ENCODE measurements at regions of chrX and their contacts with region 1.

Region 1: DNA sequence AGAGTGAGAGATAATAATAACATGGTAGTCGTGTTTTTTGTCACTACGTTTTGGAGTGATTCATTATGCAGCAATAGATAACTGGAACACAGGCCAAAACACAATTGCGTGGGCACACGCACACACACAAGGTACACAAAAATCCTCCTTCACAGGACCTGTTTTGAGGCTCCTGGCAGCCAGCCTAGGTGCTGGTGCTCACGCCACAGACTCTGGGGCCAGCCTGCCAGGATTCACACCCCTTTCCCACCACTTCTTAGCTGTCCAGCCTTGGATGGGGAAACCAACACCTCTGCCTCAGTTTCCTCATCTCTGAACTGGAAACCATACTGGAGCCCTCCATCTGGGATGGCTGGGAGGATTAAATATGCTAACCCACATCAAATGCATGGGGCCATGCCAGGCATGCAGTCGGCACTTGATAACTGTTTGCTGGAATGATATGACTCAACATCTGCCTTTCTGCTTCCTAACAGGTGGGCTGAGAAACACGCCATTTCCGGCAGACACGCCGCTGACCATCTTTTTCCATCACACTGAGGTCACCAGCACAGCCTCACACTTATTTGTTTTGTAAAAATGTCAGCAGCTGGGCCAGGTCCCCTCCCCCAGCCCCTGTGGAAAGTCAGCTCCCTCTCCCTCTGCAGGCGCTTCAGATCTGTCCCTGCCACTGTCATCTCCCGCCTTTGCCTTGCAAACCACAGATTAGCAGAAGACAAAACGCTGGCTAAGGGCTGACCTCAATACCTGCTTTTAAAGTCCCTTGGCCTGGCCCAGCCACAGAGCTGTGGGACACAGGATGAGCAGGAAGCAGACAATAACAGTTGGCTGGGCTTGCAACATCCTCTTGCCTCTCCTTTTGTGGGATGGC is 237.5 kb downstream of the BCOR start:
- DNase-seq: peak; percentile 86
- ATAC-seq: peak; percentile 74
- H3K4me3 Mint-ChIP-seq: peak overlapping the region; percentile 3
- H3K27ac Mint-ChIP-seq: peak overlapping the region; percentile 88
- H3K4me1 Mint-ChIP-seq: peaks cover 64% of the 10 kb centered on the region
- H3K27me3 Mint-ChIP-seq: no peaks in the 10 kb centered on the region

Region 2: DNA sequence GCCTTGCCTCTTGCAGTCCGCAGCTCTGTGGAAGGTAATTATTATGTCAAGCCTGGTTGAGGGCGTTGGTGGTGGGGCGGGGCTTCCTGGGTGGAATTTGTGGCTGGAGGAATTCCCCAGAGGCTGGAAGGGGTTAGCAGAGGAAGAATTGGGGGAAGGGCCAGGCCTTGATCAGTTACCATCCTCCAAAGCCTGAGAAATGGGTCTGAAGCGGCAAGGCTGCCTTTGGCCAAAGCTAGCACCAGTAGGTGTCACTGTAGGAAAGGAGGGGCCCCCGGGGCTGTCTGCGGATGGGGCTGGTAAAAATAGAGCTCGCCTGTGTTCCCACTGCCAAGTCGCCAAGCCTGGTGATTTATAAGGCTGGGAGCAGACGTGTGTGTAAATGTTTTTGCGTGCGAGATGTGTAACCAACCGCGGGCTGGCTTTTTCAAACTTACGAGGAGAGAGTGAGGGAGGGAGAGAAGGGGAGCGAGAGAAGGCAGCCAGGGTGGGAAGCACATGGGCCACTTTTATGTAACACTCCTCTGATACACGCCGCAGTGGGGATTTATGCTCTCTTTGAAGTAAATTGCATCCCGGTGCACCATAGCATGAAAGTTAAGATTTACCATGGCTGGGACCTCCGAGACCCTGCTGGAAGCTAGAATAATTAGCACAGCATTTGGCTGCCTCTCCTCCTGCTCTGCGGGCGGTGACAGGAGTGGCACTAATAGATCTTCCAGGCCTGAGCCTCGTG is 129.4 kb before region 1 on chrX:
- CTCF ChIA-PET with region 1: interaction called, 12 read pairs
- POLR2A ChIA-PET with region 1: no interaction called
- DNase-seq: peak; percentile 67
- ATAC-seq: peak; percentile 83
- H3K4me3 Mint-ChIP-seq: no peak overlapping the region
- H3K27ac Mint-ChIP-seq: no peak overlapping the region
- H3K4me1 Mint-ChIP-seq: peaks cover 14% of the 10 kb centered on the region
- H3K27me3 Mint-ChIP-seq: no peaks in the 10 kb centered on the region

Region 3: GRCh38 chrX:39814391-39814790 is 45.8 kb before region 1 on chrX:
- CTCF ChIA-PET with region 1: interaction called, 13 read pairs
- POLR2A ChIA-PET with region 1: interaction called, 25 read pairs
- DNase-seq: peak; percentile 64
- ATAC-seq: peak; percentile 69
- H3K4me3 Mint-ChIP-seq: no peak overlapping the region
- H3K27ac Mint-ChIP-seq: no peak overlapping the region
- H3K4me1 Mint-ChIP-seq: peaks cover 27% of the 10 kb centered on the region
- H3K27me3 Mint-ChIP-seq: peaks cover 3% of the 10 kb centered on the region

Region 4: DNA sequence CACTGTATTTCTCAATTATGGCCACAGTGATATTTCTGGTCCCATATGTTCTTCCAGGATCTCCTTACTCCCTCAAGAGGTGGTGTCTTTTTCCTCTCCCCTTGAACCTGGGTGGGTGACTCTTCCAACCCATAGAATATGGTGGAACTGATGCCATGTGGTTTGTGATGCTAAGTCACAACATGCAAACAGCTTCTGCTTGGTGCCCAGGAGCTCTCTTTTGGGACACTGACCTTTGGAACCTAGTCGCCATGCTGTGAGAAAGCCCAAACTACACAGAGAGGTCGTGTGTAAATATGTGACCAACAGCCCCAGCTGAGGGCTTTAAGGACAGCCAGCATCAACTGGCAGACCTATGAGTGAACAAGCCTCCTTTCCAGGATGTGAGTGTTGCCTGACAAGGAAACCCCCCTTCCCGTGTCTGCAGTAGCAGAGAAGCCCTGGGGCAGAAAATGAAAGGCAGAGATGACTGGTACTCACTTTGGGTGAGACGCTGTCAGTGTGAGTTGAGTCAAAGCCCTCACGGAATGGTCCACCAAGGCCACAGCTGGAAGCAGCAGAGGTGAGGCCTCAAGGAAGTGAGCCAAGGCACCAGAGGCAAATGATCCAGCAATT is 14.1 kb after region 1 on chrX:
- CTCF ChIA-PET with region 1: interaction called, 8 read pairs
- POLR2A ChIA-PET with region 1: interaction called, 30 read pairs
- DNase-seq: peak; percentile 68
- ATAC-seq: peak; percentile 64
- H3K4me3 Mint-ChIP-seq: no peak overlapping the region
- H3K27ac Mint-ChIP-seq: peak overlapping the region; percentile 46
- H3K4me1 Mint-ChIP-seq: peaks cover 43% of the 10 kb centered on the region
- H3K27me3 Mint-ChIP-seq: peaks cover 7% of the 10 kb centered on the region

Region 5: DNA sequence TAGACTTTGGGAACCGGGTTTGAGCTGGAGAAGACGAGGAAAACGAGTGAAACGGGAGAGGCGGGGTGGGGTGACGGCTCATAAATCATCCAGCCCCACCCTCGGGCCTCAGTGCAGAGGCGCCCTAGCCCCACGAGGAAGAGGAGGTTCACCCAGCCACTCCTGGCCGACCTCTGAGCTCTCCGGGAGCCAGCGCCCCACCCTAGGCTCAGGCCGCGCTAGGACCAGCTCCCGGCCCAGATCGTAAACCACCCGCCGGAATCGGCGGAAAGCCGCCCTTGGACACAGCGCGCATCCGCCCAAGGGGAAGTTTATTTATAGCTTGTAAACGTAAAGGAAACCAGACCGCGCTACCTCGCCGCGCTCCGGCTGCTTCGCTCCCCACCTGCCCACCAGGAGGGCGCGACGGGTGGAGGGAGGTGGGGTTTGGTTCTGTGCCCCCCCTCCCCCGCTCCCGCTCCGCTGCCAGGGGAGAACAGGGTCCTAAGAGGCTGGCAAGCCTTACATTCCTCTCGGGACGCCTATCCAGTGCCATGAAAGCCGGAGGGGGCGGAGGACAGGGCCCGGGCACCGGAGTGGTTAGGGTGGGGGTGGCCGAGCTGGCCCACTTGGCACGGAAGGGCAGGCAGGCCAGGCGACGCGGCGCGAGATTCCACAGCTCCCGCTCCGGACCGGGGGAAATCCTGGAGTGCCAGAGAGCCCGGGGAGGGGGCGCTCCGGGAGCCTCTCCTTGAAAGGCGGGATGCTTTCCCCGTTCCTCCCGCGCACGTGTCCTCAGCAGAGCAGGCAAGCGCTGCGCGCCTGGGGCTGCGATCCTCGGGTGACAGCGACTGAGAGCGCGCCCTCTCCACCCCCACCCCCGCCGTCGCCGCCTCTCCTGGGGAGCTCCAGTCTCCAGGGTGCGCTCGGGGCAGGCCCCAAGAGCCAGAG is 153.3 kb after region 1 on chrX:
- CTCF ChIA-PET with region 1: no interaction called
- POLR2A ChIA-PET with region 1: interaction called, 18 read pairs
- DNase-seq: peak; percentile 67
- ATAC-seq: peak; percentile 42
- H3K4me3 Mint-ChIP-seq: peak overlapping the region; percentile 71
- H3K27ac Mint-ChIP-seq: peak overlapping the region; percentile 75
- H3K4me1 Mint-ChIP-seq: peaks cover 34% of the 10 kb centered on the region
- H3K27me3 Mint-ChIP-seq: peaks cover 11% of the 10 kb centered on the region

Region 6: DNA sequence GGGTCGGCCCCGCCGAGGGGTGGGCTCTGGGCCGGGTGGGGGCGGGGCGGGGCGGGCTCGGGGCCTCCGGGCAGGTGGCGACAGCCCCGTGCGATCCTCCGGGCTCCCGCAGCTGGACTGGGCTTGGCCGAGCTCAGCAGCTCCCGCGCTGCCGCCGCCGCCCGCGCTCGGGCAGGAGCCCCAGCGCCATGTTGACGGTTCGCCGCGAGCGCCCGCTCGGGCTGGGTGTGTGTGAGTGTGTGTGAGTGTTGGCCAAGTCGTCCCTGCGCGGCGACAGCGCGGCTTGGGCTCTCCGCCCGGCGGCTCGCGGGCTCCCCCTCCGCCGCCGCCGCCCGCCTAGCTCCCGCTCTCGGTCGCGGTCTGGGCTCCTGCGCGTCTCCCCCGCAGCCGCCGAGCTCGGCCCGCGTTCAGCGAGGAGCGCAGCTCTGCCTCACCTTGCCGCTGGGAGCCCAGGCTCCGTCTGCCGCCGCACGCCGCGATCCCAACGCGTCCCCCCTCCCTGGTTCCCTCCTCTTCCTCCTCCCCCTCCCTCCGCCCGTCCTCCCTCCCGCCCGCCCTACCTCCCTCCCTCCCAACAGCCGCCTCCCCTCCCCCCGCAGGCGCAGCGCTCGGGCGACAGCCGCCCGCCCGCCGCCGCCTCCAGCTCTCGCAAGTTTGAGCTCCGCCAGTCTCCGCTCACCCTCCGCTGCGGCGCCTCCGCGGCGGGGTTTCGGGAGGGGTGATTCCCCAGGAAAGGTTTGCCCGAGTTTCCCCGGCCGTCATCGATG is 237.5 kb after region 1 on chrX and contains the start of gene BCOR:
- CTCF ChIA-PET with region 1: no interaction called
- POLR2A ChIA-PET with region 1: interaction called, 14 read pairs
- DNase-seq: peak; percentile 84
- ATAC-seq: peak; percentile 45
- H3K4me3 Mint-ChIP-seq: peak within 1 kb of the TSS; percentile 92
- H3K27ac Mint-ChIP-seq: peak within 1 kb of the TSS; percentile 92
- H3K4me1 Mint-ChIP-seq: peaks cover 22% of the 10 kb centered on the region
- H3K27me3 Mint-ChIP-seq: no peaks in the 10 kb centered on the region
- total RNA-seq, gene BCOR: 41.5 to 45.5 TPM

Measured in activated CD8-positive, alpha-beta T cell treated with anti-CD3 and anti-CD28 coated beads, Interleukin-2, amount 10 ng/mL, durations not matched to agents 7 days and 5 days (primary cell).